MCF 10A (cell line): ENCODE measurements at regions of chr18 and their contacts with region 1.

Region 1: DNA sequence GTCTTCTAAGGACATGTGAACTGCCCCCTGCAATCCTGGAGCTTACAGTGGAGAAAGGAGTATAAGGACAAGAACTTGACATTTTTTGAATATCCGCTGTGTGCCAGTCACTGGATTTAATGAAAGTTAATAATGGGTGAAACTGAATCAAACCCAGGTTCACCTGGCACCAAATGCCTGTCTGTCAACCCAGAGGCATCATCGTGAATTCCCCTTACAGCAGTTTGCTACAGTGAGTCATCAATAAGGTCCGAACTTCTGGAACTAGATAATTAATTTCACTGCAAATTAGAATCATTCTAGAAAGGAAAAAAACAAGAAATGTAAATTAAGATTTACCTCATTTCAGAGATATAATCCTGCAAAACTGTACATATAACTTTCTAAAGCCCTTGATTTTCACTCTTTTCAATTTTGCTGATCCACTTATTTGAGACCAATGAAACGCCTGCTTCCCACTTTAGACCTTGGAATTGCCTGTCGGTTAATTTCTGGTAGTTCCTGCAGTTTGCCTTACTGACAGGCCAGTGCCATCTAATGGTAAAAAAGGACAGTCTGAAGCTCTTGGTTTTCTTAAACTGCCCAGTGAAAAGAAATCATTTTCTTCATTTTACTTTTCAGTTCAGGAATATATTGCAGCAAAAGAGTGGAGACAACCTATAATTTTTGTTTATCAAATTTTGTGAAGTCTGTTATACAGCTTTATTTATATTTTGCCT is 8.2 kb downstream of the DSG2 start:
- DNase-seq: peak; percentile 42
- H3K4me3 Mint-ChIP-seq: no peak overlapping the region
- H3K27ac Mint-ChIP-seq: no peak overlapping the region
- H3K4me1 Mint-ChIP-seq: peaks cover 34% of the 10 kb centered on the region
- H3K27me3 Mint-ChIP-seq: no peaks in the 10 kb centered on the region
- CTCF ChIP-seq: peak; percentile 35

Region 2: DNA sequence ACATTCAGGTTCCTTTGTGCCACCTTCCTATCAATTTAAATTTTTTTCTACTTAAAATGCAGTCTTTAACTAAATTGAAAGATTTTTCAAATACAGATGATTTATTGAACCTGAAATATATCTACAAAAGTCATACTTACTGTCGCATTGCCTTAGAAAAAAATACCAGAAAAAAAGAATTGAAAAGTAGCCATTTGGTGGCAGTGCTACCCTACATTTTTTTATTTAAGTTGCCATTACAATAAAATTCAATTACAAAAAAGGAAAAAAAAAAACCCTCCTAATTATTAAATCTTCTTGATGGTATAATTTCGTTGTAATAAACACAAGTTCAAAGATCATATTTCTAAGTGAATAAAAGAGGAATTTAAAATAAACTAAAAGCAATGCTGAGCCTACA is 507.0 kb before region 1 on chr18:
- CTCF ChIA-PET with region 1: no interaction called
- POLR2A ChIA-PET with region 1: no interaction called
- intact Hi-C with region 1: loop called (anchors 5 kb)
- DNase-seq: no peak
- H3K4me3 Mint-ChIP-seq: no peak overlapping the region
- H3K27ac Mint-ChIP-seq: no peak overlapping the region
- H3K4me1 Mint-ChIP-seq: no peaks in the 10 kb centered on the region
- H3K27me3 Mint-ChIP-seq: no peaks in the 10 kb centered on the region
- CTCF ChIP-seq: peak; percentile 36

Region 3: GRCh38 chr18:31267823-31268481 is 238.2 kb before region 1 on chr18:
- CTCF ChIA-PET with region 1: interaction called, 3 read pairs
- POLR2A ChIA-PET with region 1: interaction called, 5 read pairs
- intact Hi-C with region 1: loop called (anchors 5 kb)
- DNase-seq: no peak
- H3K4me3 Mint-ChIP-seq: peak overlapping the region; percentile 12
- H3K27ac Mint-ChIP-seq: peak overlapping the region; percentile 84
- H3K4me1 Mint-ChIP-seq: peaks cover 28% of the 10 kb centered on the region
- H3K27me3 Mint-ChIP-seq: no peaks in the 10 kb centered on the region
- CTCF ChIP-seq: no peak

Region 4: DNA sequence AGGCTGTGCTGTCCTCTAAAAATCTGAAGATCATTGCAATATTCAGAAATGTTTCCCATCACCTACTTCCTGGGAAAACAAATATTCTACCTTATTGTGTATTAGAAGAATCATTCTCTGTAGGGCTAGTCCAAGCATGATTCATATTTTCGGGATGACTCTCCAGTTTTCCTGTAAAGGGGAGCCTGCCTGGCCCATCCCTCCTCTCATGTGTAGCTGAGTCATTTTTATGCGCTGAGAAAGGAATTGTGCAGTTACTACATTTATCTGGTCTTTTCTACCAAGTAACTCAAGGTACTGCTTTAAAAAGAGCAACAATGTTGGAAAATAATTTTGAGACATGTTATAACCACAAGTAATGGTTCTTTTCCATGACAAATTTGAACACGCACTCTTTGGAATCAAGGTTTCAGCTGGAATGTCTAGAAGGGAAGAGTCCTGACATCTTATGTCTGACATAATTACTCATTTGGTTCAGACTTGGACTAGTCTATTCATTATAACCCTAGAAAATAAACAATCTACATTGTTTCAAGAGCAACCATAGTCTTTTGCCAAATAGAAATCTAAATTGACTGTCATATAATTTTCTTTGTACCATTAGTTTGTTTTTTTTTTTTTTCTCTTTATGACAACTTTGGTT is 52.0 kb before region 1 on chr18:
- CTCF ChIA-PET with region 1: interaction called, 5 read pairs
- POLR2A ChIA-PET with region 1: interaction called, 106 read pairs
- intact Hi-C with region 1: no loop called
- DNase-seq: peak; percentile 96
- H3K4me3 Mint-ChIP-seq: peak overlapping the region; percentile 67
- H3K27ac Mint-ChIP-seq: peak overlapping the region; percentile 94
- H3K4me1 Mint-ChIP-seq: peaks cover 23% of the 10 kb centered on the region
- H3K27me3 Mint-ChIP-seq: no peaks in the 10 kb centered on the region
- CTCF ChIP-seq: no peak

Region 5: GRCh38 chr18:31490387-31490786 is 15.8 kb before region 1 on chr18:
- CTCF ChIA-PET with region 1: interaction called, 7 read pairs
- POLR2A ChIA-PET with region 1: interaction called, 189 read pairs
- intact Hi-C with region 1: no loop called
- DNase-seq: peak; percentile 73
- H3K4me3 Mint-ChIP-seq: no peak overlapping the region
- H3K27ac Mint-ChIP-seq: peak overlapping the region; percentile 65
- H3K4me1 Mint-ChIP-seq: peaks cover 49% of the 10 kb centered on the region
- H3K27me3 Mint-ChIP-seq: no peaks in the 10 kb centered on the region
- CTCF ChIP-seq: no peak

Region 6: DNA sequence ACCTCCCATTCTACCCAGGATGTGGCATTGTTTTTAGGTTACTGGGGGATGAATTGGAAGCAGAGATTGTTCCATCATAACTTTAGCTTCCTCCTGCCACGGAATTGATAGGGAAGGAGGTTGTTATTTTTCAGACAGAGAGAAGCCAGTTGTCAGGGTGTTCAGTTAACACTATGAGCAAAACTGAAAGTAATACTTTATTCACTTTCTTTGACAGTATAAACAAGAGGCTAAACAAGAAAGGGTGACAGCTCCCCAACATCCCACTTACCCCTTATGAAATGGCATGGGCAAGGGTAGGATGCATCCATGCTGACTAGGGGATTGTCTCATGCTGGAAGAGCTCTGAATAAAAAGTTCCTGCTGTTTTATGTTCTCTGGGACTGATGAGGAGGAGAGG is 1000.9 kb after region 1 on chr18:
- CTCF ChIA-PET with region 1: no interaction called
- POLR2A ChIA-PET with region 1: no interaction called
- intact Hi-C with region 1: no loop called
- DNase-seq: no peak
- H3K4me3 Mint-ChIP-seq: no peak overlapping the region
- H3K27ac Mint-ChIP-seq: no peak overlapping the region
- H3K4me1 Mint-ChIP-seq: no peaks in the 10 kb centered on the region
- H3K27me3 Mint-ChIP-seq: no peaks in the 10 kb centered on the region
- CTCF ChIP-seq: no peak